ENCODE measurements at regions of chr18 and their contacts with region 1.

Region 1: GRCh38 chr18:58128381-58129374 is 84.7 kb downstream of the NEDD4L start:
- DNase-seq: no peak
- ATAC-seq: no peak
- H3K4me3 ChIP-seq: no peak overlapping the region
- H3K27ac ChIP-seq: no peak overlapping the region
- H3K4me1 ChIP-seq: no peaks in the 10 kb centered on the region
- H3K27me3 ChIP-seq: no peaks in the 10 kb centered on the region
- CTCF ChIP-seq: no peak
- POLR2A ChIP-seq: no peak

Region 2: DNA sequence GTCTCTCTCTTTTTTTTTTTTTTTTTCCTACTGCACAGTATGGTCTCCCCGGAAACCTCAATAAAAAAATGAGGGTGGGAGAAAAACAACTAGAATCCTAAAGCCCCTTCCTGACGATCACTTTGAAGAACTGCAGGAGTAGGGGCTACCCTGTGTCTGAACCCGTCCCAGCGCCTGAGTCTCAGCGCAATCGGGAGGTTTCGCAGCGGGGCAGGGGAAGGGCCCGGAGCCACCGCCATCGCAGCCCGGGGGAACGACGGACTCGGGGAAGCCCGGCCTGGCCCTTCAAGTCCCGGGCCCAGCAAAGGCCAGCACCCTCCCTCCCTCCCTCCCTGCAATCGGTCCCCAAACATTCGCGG is 507.5 kb before region 1 on chr18:
- intact Hi-C with region 1: loop called in 3 of 10 experiments (anchors 5 to 10 kb)
- DNase-seq: no peak
- ATAC-seq: peak; percentile 4 to 57 (median 49)
- H3K4me3 ChIP-seq: peak overlapping the region; percentile 60 to 93 (median 84)
- H3K27ac ChIP-seq: peak overlapping the region; percentile 58 to 96 (median 88)
- H3K4me1 ChIP-seq: peaks cover 0 to 38% (median 17%) of the 10 kb centered on the region in 12 donors
- H3K27me3 ChIP-seq: no peaks in the 10 kb centered on the region
- CTCF ChIP-seq: no peak
- POLR2A ChIP-seq: no peak

Region 3: GRCh38 chr18:57630002-57630753 is 498.5 kb before region 1 on chr18:
- intact Hi-C with region 1: loop called in 4 of 10 experiments (anchors 5 to 10 kb)
- DNase-seq: peak; percentile 97 to 98 (median 98)
- ATAC-seq: peak; percentile 98 to 99 (median 98)
- H3K4me3 ChIP-seq: peak overlapping the region; percentile 50 to 81 (median 70)
- H3K27ac ChIP-seq: peak overlapping the region in 11 of 12 donors; percentile 42 to 90 (median 83)
- H3K4me1 ChIP-seq: peaks cover 0 to 18% (median 9%) of the 10 kb centered on the region in 12 donors
- H3K27me3 ChIP-seq: no peaks in the 10 kb centered on the region
- CTCF ChIP-seq: peak; percentile 56 to 95 (median 70)
- POLR2A ChIP-seq: peak in 1 of 2 donors; percentile 40

Region 4: GRCh38 chr18:57635003-57635822 is 493.5 kb before region 1 on chr18:
- intact Hi-C with region 1: loop called in 4 of 10 experiments (anchors 5 to 10 kb)
- DNase-seq: no peak
- ATAC-seq: peak in 1 of 4 donors; percentile 43
- H3K4me3 ChIP-seq: no peak overlapping the region
- H3K27ac ChIP-seq: no peak overlapping the region
- H3K4me1 ChIP-seq: peaks cover 0 to 14% (median 7%) of the 10 kb centered on the region in 12 donors
- H3K27me3 ChIP-seq: no peaks in the 10 kb centered on the region
- CTCF ChIP-seq: no peak
- POLR2A ChIP-seq: no peak

Region 5: GRCh38 chr18:57644540-57644939 is 484.1 kb before region 1 on chr18:
- intact Hi-C with region 1: loop called in 4 of 10 experiments (anchors 5 to 10 kb)
- DNase-seq: no peak
- ATAC-seq: no peak
- H3K4me3 ChIP-seq: no peak overlapping the region
- H3K27ac ChIP-seq: no peak overlapping the region
- H3K4me1 ChIP-seq: peaks cover 0 to 4% (median 0%) of the 10 kb centered on the region in 12 donors
- H3K27me3 ChIP-seq: no peaks in the 10 kb centered on the region
- CTCF ChIP-seq: peak in 7 of 12 donors; percentile 11 to 41 (median 30)
- POLR2A ChIP-seq: no peak

Region 6: GRCh38 chr18:57881818-57882413 is 246.8 kb before region 1 on chr18:
- intact Hi-C with region 1: loop called (anchors 2 to 5 kb)
- DNase-seq: peak; percentile 35 to 65 (median 62)
- ATAC-seq: peak; percentile 77 to 94 (median 88)
- H3K4me3 ChIP-seq: no peak overlapping the region
- H3K27ac ChIP-seq: no peak overlapping the region
- H3K4me1 ChIP-seq: peaks cover 0 to 5% (median 0%) of the 10 kb centered on the region in 12 donors
- H3K27me3 ChIP-seq: no peaks in the 10 kb centered on the region
- CTCF ChIP-seq: peak; percentile 83 to 95 (median 89)
- POLR2A ChIP-seq: no peak

Region 7: DNA sequence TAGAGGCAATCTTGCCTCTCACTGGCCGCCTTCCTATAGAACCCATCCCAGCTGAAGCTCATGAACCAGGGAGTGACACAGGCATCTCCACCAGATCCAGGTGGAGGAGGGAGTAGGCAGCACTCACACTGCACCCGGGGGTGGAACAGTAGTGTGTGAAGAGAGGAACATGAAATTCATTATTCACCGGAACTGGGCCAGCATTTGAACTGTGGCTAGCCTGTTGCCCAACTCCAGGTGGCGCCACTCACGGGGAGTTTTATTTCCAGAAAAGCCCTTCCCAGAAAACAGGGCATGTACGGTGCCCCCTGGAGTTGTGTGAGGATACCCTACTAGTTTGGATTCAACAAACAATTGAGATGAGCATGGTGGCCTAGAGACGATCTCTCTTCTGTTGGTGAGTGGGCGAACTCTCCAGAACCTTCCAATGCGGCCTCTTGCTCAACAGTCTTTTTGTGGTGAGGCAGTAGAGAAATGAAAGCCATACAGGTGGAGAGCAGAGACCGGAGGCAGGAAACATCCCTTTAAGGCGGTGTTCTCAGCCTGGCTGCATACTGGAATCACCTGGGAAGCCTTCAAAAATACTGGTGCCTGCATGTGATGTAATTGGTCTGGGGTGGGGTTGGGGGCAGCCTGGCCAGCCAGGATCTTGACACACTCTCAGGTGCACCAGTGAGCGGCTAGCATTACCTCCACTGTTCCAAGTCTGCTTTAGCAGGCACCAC is 158.2 kb before region 1 on chr18:
- intact Hi-C with region 1: loop called in 1 of 10 experiments (anchors 10 kb)
- DNase-seq: no peak
- ATAC-seq: no peak
- H3K4me3 ChIP-seq: no peak overlapping the region
- H3K27ac ChIP-seq: no peak overlapping the region
- H3K4me1 ChIP-seq: no peaks in the 10 kb centered on the region
- H3K27me3 ChIP-seq: peaks cover 0 to 3% (median 0%) of the 10 kb centered on the region in 9 donors
- CTCF ChIP-seq: peak in 1 of 12 donors; percentile 17
- POLR2A ChIP-seq: no peak

Measured in heart left ventricle (tissue), 16 donors.